Activated CD4-positive, alpha-beta T cell treated with anti-CD3 and anti-CD28 coated beads for 36 hours (primary cell): ENCODE measurements at regions of chr21 and their contacts with region 1.

Region 1: GRCh38 chr21:41411449-41412089 is 14.5 kb upstream of the MX1 start:
- DNase-seq: peak; percentile 55
- ATAC-seq: peak; percentile 60
- H3K4me3 Mint-ChIP-seq: no peak overlapping the region
- H3K27ac Mint-ChIP-seq: no peak overlapping the region
- H3K4me1 Mint-ChIP-seq: peaks cover 2% of the 10 kb centered on the region
- H3K27me3 Mint-ChIP-seq: no peaks in the 10 kb centered on the region

Region 2: DNA sequence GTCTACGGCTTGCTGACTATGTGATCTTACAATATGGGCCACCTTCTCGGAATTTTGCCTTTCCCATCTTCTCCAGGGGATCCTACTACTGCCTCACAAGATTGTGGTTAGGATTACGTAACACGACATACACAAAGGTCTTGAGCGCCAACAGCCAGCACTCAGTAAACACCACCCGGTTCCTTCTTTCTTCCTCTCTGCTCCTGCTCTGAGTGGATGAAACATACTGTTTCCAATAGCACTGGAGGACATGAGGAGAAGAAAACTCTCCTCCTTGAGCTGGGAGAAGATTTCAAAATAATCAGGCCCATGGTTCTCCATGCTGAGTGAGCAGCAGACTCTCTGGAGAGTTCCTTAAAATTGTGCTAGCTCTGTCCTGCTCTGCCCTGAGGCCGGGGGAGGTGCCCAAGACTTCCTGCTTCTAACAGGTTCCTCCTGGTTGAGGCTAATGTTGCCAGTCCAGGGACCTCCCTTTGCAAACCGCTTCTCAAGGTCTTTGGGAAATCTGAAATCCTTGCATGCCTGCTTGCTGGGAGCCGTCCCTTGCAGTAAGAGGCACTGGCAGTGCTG is 15.0 kb before region 1 on chr21:
- CTCF ChIA-PET with region 1: no interaction called
- POLR2A ChIA-PET with region 1: no interaction called
- intact Hi-C with region 1: loop called in 1 of 2 experiments (anchors 1 kb)
- DNase-seq: no peak
- ATAC-seq: no peak
- H3K4me3 Mint-ChIP-seq: no peak overlapping the region
- H3K27ac Mint-ChIP-seq: no peak overlapping the region
- H3K4me1 Mint-ChIP-seq: no peaks in the 10 kb centered on the region
- H3K27me3 Mint-ChIP-seq: no peaks in the 10 kb centered on the region

Region 3: DNA sequence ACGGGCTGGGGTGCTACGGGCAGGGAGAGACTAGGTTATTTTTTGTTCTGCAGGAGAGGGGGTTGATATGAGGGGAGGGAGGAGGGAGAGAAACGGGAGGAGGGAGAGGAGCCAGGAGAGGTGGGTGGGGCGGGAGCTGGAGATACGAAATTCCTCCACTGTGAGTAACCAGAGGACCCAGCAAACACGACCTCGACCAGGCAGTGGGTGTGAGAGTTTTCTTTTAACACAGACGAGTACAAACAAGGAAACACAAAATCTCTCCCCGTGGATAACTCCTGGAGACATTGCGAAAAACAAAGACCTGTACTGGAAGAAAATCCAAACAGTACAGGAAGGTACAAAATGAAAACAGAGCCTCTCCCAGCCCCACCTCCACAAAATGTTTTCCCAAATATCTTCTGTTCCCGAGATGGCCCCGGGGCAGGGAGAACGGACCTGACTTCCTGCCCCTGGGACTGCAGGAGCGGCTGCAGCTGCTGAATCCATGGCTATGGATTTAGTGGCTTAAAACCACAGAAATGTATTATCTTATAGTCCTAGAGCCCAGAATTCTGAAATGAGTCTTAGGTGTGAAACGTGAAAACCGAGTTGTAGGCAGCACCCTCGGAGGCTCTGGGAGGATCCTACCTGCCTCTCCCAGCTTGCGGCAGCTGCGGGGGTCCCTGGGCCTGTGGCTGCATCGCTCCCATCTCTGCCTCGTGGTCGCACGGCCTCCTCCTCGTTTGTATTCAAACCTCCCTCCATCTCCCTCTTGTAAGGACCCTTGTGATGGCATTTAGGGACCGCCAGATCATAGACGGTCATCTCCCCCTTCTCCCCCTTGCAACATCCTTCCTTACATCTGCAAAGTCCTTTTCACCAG is 273.0 kb after region 1 on chr21:
- CTCF ChIA-PET with region 1: no interaction called
- POLR2A ChIA-PET with region 1: no interaction called
- intact Hi-C with region 1: no loop called
- DNase-seq: no peak
- ATAC-seq: no peak
- H3K4me3 Mint-ChIP-seq: no peak overlapping the region
- H3K27ac Mint-ChIP-seq: no peak overlapping the region
- H3K4me1 Mint-ChIP-seq: no peaks in the 10 kb centered on the region
- H3K27me3 Mint-ChIP-seq: peaks cover 3% of the 10 kb centered on the region